Activated CD4-positive, alpha-beta T cell treated with anti-CD3 and anti-CD28 coated beads for 36 hours (primary cell): ENCODE measurements at regions of chr6 and their contacts with region 1.

Region 1: GRCh38 chr6:25138237-25139125 is 140.7 kb upstream of the CARMIL1 start:
- DNase-seq: peak; percentile 81
- ATAC-seq: peak; percentile 93
- H3K4me3 Mint-ChIP-seq: peak overlapping the region; percentile 81
- H3K27ac Mint-ChIP-seq: peak overlapping the region; percentile 97
- H3K4me1 Mint-ChIP-seq: peaks cover 31% of the 10 kb centered on the region
- H3K27me3 Mint-ChIP-seq: no peaks in the 10 kb centered on the region

Region 2: DNA sequence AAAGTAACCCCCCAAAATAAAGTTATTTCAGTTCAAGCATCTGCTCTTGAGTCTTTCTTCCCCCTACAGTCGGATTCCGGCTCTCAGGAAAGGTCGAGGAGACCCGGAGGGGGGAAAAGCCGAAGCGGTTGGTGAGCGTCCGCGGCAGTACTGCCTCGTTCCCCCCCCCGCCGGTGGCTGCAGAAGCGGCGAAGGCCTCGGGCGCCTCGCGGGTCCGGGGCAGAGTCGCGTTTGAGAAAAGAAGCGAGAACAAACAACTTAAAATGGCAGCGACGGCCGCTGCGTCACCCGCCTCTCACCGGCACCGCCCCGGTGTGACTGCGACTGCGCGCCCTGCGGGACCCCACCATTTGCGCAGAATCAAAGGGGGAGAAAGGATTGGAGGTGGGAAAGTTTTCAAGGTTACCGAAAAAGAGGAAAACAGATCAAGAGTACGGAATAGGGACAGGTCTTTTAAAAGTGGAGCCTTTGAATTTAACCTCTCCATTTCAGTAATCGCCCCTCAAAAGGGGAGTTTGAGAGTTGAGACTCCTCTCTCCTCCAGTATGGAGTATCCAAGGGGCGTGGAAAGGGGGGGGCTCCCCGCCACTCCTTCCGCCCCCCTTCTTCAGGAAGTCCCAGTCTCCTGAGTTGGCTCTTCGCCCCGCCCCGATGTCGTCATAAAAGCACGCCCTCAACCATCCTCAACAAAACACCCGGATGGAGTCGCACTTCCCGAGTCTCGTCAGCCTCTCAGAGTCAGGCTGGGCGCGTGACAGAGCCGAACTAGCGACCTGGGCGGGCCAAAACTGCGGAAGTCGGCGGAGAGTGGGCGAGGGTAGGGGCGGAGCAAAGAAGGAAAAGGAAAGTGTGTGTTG is 417.6 kb before region 1 on chr6:
- CTCF ChIA-PET with region 1: no interaction called
- POLR2A ChIA-PET with region 1: interaction called, 3 read pairs
- intact Hi-C with region 1: loop called in 1 of 2 experiments (anchors 1 kb)
- DNase-seq: peak; percentile 100
- ATAC-seq: peak; percentile 88
- H3K4me3 Mint-ChIP-seq: peak overlapping the region; percentile 99
- H3K27ac Mint-ChIP-seq: peak overlapping the region; percentile 98
- H3K4me1 Mint-ChIP-seq: peaks cover 32% of the 10 kb centered on the region
- H3K27me3 Mint-ChIP-seq: no peaks in the 10 kb centered on the region

Region 3: GRCh38 chr6:25027221-25027916 is 111.1 kb before region 1 on chr6:
- CTCF ChIA-PET with region 1: interaction called, 6 read pairs
- POLR2A ChIA-PET with region 1: no interaction called
- intact Hi-C with region 1: loop called (anchors 1 to 5 kb)
- DNase-seq: peak; percentile 90
- ATAC-seq: peak; percentile 95
- H3K4me3 Mint-ChIP-seq: peak overlapping the region; percentile 62
- H3K27ac Mint-ChIP-seq: peak overlapping the region; percentile 77
- H3K4me1 Mint-ChIP-seq: peaks cover 51% of the 10 kb centered on the region
- H3K27me3 Mint-ChIP-seq: no peaks in the 10 kb centered on the region

Region 4: GRCh38 chr6:25173951-25174474 is 35.5 kb after region 1 on chr6:
- CTCF ChIA-PET with region 1: interaction called, 6 read pairs
- POLR2A ChIA-PET with region 1: no interaction called
- intact Hi-C with region 1: loop called (anchors 1 to 2 kb)
- DNase-seq: no peak
- ATAC-seq: peak; percentile 72
- H3K4me3 Mint-ChIP-seq: no peak overlapping the region
- H3K27ac Mint-ChIP-seq: peak overlapping the region; percentile 35
- H3K4me1 Mint-ChIP-seq: peaks cover 42% of the 10 kb centered on the region
- H3K27me3 Mint-ChIP-seq: no peaks in the 10 kb centered on the region

Region 5: GRCh38 chr6:25777856-25778649 is 639.6 kb after region 1 on chr6:
- CTCF ChIA-PET with region 1: no interaction called
- POLR2A ChIA-PET with region 1: no interaction called
- intact Hi-C with region 1: loop called in 1 of 2 experiments (anchors 1 kb)
- DNase-seq: no peak
- ATAC-seq: peak; percentile 68
- H3K4me3 Mint-ChIP-seq: no peak overlapping the region
- H3K27ac Mint-ChIP-seq: peak overlapping the region; percentile 72
- H3K4me1 Mint-ChIP-seq: peaks cover 23% of the 10 kb centered on the region
- H3K27me3 Mint-ChIP-seq: peaks cover 14% of the 10 kb centered on the region

Region 6: DNA sequence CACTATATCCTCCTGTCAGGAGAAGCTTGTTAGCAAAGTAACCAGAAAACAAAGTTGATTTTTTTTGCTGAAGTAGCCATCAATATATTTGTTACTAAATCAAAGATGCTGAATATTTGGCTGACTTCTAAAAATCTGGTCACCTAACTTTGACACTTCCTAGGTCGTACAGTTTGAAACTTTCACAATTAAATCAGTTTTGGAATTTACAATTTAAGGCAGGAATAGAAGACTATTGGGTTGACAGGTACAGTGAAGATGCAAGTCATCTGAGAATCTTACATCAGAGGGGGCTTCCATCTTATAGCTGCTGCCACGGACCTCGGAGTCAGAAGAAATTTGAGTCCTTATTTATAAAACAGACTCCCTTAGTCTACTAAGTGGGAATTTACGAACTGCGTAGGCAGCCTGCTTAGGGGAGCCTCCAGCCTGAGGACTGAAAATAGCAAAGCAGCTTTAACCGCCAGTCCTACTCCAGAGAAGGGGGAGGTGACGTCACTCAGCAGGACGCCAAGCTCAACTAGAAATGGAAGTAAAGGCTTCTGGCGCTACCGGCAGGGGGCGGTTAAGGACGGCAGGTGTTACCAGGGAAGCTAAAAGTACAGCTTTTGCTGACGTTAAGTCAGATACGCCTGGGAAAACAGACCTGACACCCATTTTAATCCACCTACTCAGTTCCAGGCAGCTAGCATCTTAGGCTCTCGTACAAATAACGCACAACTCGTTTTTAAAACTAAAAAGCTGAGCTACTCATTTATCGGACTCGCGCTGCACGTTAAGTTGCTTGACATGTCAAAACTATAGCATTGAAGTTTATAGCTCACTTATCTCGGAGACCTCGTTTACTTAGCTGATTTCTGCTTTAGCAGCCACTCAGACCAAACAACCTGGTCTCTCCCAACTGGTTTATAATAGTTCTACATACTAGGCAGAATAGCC is 887.7 kb after region 1 on chr6:
- CTCF ChIA-PET with region 1: no interaction called
- POLR2A ChIA-PET with region 1: no interaction called
- intact Hi-C with region 1: loop called in 1 of 2 experiments (anchors 1 kb)
- DNase-seq: peak; percentile 96
- ATAC-seq: peak; percentile 39
- H3K4me3 Mint-ChIP-seq: peak overlapping the region; percentile 81
- H3K27ac Mint-ChIP-seq: peak overlapping the region; percentile 98
- H3K4me1 Mint-ChIP-seq: peaks cover 51% of the 10 kb centered on the region
- H3K27me3 Mint-ChIP-seq: no peaks in the 10 kb centered on the region